Posterior vena cava (tissue), 2 donors: ENCODE measurements at regions of chr2 and their contacts with region 1.

Region 1: DNA sequence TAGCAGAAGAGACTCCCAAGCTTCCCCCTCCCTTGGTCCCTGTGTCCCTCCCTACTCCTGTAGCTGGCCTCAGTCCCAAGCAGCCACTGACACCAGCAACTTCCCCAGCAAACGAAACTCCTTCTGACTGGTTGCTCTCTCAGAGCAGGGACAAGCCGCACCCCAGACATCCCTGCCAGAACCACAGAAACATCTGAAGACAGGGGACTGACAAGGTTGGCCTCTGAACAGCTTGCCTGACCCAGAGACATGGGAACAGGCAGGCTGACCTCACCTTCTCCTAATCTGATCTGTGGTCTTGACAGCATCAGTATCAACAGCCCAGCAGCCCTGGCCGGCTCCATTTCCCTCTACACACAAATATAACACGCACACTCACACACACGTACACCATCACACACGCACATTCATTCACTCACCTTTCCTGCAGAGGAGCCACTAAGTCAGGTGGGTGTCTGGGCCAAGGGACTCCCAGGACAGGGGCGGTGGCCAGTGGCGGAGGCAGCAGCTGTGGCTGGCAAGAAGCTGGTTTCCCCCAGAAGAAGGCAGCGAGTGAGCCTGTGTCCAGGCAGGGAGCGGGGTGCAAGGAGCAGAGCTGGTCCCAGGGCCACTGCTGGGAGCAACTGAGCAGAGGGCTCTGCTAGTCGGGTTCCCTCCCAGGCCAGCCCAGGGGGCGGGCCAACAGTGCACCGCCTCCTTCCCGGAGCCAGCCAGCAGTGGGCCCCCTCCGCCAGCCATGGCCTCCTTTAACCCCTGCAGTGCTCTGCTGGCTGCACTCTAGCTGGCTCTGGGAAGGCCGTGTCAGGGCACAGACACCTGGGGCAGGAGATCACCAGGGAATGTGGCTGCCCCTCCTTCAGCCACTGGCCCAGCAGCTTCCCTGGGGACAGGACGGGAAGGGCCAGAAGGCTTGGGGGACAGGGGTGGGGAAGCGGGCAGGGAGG is 59.1 kb downstream of the TNS1 start:
- DNase-seq: peak; percentile 94

Region 2: GRCh38 chr2:217905395-217905794 is 38.3 kb before region 1 on chr2:
- intact Hi-C with region 1: loop called in 1 of 2 experiments (anchors 5 kb)
- DNase-seq: no peak

Region 3: DNA sequence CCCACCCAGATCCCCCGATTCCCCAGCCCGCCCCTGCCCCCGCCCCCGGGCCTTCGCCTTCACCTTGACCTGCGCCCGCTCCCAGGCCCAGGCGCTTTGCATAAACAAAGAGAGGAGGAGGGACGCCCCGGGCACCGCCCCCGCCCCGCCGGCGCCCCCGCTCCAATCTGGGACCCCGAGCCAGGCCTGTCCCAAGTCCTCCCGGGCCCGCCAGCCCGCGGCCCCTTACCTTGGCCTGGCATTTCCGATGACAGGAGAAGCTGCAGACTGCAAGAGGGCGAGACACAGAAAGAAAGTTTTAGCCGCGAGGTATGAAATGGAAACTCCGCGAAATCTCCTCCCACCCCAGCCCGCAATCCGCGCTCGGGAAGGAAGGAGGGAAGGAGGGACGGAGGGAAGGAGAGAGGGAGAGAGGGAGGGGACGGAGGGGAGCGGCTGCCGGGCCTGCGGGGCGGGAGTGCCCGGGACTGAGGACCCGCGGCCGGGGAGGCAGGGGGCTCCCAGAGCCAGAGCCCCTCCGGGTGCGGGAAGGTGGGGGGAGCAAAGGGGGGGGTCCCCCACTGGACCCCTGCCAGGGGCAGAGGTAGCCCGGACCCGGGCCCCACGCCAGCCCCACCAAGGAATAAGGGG is 34.9 kb after region 1 on chr2:
- intact Hi-C with region 1: loop called in 1 of 2 experiments (anchors 5 kb)
- DNase-seq: peak; percentile 82

Region 4: GRCh38 chr2:217988014-217988839 is 44.5 kb after region 1 on chr2:
- intact Hi-C with region 1: loop called in 1 of 2 experiments (anchors 2 kb)
- DNase-seq: peak; percentile 95

Region 5: DNA sequence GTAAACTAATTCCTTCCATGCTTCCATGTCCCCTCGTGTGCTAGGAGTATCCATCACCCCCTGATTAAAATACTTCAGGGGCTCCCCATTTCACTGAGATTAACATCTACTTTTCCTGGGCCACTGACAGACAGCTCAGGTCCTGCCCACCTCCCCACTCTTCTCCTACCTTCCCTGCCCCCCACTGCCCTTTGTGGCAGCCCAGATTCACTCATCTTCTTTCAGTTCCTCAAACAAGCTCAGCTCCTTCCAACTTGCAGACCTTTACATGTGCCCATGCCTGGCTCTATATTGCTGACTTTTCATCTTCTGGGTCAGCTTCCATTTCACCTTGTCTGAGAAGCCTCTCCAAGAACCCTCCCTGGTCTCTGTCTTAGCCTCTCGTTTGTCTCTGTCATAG is 137.3 kb after region 1 on chr2:
- intact Hi-C with region 1: no loop called
- DNase-seq: no peak